Mammary epithelial cell (primary cell): ENCODE measurements at regions of chr5 and their contacts with region 1.

Region 1: DNA sequence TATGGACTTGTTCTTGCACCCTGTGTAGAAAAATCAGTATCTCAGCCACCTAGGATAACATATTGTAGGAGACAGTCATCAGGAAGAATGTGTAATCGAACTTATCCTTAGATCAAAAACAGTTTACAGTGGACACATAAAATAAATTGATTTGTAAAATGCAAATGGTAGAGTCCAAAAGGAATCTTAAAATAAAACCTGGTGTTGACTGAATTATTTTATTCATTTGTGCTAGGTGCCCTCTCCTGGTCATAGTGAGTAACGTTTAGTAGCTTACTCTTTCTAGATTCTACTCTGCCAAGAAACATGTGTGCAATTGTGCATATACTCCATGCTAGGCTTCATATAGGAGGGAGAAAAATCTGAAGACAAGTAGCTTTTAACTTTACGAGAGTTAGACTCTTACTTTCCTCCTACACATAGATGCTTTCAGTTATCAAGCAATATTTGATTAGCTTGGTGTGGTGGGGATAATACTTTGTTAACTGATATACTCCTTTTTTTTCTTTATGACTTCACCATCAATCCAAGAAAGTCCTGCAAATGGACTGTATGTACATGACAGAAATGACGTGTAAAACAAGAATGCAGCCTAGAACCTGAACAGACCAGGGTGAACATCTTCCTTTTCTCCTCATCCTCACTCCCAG is 23.7 kb upstream of the LOX start:
- DNase-seq: peak; percentile 35
- H3K4me3 ChIP-seq: no peak overlapping the region
- H3K27ac ChIP-seq: no peak overlapping the region
- H3K4me1 ChIP-seq: peaks cover 22% of the 10 kb centered on the region
- H3K27me3 ChIP-seq: no peaks in the 10 kb centered on the region
- CTCF ChIP-seq: peak; percentile 61 to 74

Region 2: GRCh38 chr5:121630402-121630801 is 471.4 kb before region 1 on chr5:
- CTCF ChIA-PET with region 1: no interaction called
- dilution Hi-C with region 1: no loop called
- in situ Hi-C with region 1: no loop called
- intact Hi-C with region 1: loop called (anchors 5 kb)
- DNase-seq: peak; percentile 16
- H3K4me3 ChIP-seq: no peak overlapping the region
- H3K27ac ChIP-seq: no peak overlapping the region
- H3K4me1 ChIP-seq: no peaks in the 10 kb centered on the region
- H3K27me3 ChIP-seq: peaks cover 4% of the 10 kb centered on the region
- CTCF ChIP-seq: peak in 1 of 2 donors; percentile 43

Region 3: GRCh38 chr5:121962347-121962670 is 139.5 kb before region 1 on chr5:
- CTCF ChIA-PET with region 1: no interaction called
- dilution Hi-C with region 1: no loop called
- in situ Hi-C with region 1: loop called in 1 of 2 experiments (anchors 25 kb)
- intact Hi-C with region 1: loop called (anchors 1 kb)
- DNase-seq: no peak
- H3K4me3 ChIP-seq: peak overlapping the region; percentile 81 to 87 (median 87)
- H3K27ac ChIP-seq: peak overlapping the region; percentile 97
- H3K4me1 ChIP-seq: peaks cover 10% of the 10 kb centered on the region
- H3K27me3 ChIP-seq: no peaks in the 10 kb centered on the region
- CTCF ChIP-seq: no peak

Region 4: GRCh38 chr5:122040636-122041302 is 61.0 kb before region 1 on chr5:
- CTCF ChIA-PET with region 1: no interaction called
- dilution Hi-C with region 1: no loop called
- in situ Hi-C with region 1: no loop called
- intact Hi-C with region 1: no loop called
- DNase-seq: no peak
- H3K4me3 ChIP-seq: no peak overlapping the region
- H3K27ac ChIP-seq: no peak overlapping the region
- H3K4me1 ChIP-seq: no peaks in the 10 kb centered on the region
- H3K27me3 ChIP-seq: no peaks in the 10 kb centered on the region
- CTCF ChIP-seq: no peak

Region 5: DNA sequence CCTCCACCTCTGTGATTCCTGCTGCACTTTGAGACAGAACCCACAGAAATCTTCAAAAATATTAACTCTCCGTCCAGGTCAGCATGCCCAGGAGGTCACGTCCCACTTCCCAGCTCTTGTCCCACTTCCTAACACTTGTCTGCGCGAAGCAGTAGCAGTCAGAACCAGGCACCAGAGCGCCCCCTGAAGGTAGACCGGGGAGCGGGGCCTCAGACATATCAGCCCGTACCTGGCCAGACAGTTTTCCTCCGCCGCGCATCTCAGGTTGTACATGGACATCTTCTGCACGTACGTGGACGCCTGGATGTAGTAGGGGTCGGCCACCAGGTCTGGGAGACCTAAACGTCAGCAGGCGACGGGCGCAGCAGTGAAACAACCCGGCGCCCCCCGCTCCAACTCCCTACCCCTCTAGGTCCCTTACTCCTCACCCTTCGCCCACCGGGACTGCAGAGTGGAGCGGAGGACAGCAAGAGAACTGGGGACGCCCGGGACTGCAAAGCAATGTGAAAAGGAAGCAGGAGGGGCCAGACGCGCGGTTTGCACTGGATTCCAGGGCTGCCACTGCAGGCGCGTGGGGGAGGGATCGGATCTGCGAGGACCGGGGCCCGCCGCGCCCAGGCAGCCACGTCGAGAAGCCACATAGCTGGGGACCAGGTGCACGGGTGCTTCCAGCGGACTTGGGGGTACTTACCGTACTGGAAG is 24.9 kb before region 1 on chr5:
- CTCF ChIA-PET with region 1: no interaction called
- dilution Hi-C with region 1: no loop called
- in situ Hi-C with region 1: no loop called
- intact Hi-C with region 1: loop called (anchors 1 kb)
- DNase-seq: peak; percentile 75
- H3K4me3 ChIP-seq: peak overlapping the region; percentile 41 to 73 (median 69)
- H3K27ac ChIP-seq: peak overlapping the region; percentile 53
- H3K4me1 ChIP-seq: peaks cover 30% of the 10 kb centered on the region
- H3K27me3 ChIP-seq: no peaks in the 10 kb centered on the region
- CTCF ChIP-seq: peak; percentile 84 to 95

Region 6: DNA sequence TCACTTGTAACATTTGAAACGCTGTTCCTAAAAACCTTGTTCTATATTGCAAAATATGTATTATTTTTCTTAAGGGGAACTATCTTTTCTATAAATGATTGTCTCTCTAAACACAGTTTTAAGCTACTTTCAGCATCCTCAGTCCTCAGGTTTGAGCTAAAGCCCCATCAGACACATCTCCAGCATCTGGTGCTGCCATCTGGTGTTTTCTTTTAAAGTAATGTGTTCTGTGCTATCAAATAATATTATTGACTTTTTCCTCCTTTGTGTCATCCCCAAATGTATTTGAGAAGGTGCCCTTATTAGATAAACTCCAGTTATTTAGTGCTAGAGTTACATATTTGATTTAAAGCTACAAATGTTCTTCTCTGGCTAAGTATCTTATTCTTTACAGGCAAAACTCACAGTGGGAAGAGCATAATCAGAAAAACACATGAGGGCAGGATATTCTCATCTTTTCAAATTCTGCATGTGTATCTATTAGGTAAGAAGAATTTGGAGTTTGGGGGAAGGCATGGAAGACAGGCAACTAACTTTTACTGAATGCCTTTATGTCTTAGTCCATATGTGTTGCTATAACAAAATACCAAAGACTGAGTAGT is 55.1 kb after region 1 on chr5:
- CTCF ChIA-PET with region 1: interaction called, 9 read pairs
- dilution Hi-C with region 1: no loop called
- in situ Hi-C with region 1: loop called in 1 of 2 experiments (anchors 10 kb)
- intact Hi-C with region 1: loop called (anchors 1 kb)
- DNase-seq: peak; percentile 45
- H3K4me3 ChIP-seq: no peak overlapping the region
- H3K27ac ChIP-seq: no peak overlapping the region
- H3K4me1 ChIP-seq: peaks cover 3% of the 10 kb centered on the region
- H3K27me3 ChIP-seq: no peaks in the 10 kb centered on the region
- CTCF ChIP-seq: peak; percentile 43 to 59